ENCODE measurements at regions of chr11 and their contacts with region 1.

Region 1: DNA sequence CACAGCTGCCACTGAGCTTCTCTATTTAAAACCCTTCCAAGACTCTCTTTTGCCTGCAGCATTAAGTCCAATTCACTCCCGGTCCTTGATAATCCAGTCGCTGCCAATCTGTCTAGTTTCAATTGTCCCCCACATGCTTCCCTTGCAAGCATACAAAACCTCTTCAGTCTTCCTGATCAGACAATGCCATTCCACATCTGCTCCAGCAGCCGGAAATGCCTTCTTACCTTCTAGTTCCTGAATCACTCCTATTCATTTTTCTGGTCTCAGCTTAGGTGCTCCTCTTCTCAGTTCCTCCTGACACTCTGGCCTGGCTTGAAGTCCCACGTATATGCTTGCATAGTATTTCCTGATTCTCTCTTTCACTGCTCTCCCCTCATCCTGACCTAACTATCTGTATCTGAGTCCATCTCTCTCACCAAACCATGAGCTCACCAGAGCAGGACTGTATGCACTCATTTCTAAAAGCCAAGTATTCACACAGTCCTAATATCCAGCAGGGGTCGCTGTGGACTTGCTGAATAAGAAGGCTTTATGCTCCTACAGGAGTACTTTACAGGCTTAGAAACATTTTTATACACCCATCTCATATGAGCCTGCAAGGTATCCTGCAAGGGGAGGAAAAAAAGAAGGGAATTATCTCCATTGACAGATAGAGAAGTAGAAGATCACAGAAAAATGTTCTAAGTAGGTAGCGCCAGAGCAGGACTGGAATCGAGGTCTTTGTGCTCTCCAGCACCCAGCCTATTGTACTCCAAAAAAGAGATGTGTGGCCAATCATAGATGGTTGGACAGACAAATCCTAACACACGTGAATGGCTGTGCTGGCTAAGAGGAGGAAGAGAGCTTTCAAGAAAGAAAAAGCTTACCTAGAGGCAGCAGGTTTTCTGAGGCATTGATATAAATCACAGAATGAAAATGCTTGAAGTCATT is 19.2 kb downstream of the XRRA1 start:
- DNase-seq: no peak
- ATAC-seq: peak; percentile 81

Region 2: DNA sequence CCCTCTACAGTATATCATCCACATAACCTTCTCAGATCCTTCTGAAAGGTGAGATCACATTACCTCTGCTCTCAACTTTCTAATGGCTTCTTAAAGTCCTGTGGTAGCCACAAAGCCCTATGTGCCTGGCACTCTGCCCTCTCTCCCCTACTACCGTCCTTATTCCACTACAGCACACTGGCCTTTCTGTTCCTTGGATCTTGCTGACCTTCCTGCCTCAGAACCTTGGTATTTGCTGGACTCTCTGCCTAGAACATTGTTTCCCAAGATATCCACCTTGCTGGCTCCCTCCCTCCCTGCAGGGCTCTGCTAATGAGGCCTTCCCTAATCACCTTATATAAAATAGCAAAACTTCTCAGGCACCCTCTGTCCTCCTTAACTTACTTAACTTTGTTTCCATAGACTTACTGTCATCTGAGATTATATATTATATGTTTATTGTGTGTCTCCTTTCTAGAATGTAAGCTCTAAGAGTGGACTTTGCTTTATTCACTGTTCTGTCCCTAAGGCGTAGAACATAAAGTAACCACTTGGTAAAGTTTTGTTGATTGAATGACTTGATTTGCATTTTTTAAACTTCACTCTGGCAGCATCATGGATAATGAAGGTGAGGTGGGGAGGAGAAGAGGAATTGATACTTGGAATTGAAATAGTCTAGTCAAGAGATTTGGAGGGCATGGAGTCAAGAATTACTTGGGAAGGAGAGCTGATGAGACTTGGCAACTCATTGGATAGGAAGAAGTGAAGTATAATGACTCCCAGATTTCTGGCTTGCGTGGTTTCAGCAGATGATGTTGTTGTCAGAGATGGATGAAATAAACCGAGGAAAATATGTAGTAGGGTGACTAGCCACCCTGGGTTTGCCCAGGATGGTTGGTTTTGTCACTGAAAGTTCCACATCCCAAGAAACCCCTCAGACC is 326.8 kb before region 1 on chr11:
- intact Hi-C with region 1: no loop called
- DNase-seq: no peak
- ATAC-seq: no peak

Region 3: DNA sequence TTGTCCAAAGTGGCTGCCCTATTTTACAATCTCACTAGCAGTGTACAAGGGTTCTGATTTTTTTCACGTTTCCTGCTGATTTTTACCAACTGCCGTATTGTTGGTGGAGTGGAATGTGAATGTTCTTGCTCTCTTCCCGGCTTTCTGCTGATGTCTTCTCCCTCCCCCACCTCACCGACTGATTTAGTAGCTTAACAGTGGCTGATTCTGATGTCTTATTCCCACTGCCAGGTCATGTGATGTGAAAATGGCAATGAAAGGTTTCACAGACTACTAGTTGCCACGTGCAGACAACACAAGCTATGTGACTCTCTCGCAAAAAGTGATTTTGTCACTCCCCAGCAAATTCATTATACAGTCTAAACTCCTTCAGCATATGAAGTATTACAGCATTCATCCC is 41.7 kb after region 1 on chr11:
- intact Hi-C with region 1: no loop called
- DNase-seq: no peak
- ATAC-seq: no peak

Region 4: DNA sequence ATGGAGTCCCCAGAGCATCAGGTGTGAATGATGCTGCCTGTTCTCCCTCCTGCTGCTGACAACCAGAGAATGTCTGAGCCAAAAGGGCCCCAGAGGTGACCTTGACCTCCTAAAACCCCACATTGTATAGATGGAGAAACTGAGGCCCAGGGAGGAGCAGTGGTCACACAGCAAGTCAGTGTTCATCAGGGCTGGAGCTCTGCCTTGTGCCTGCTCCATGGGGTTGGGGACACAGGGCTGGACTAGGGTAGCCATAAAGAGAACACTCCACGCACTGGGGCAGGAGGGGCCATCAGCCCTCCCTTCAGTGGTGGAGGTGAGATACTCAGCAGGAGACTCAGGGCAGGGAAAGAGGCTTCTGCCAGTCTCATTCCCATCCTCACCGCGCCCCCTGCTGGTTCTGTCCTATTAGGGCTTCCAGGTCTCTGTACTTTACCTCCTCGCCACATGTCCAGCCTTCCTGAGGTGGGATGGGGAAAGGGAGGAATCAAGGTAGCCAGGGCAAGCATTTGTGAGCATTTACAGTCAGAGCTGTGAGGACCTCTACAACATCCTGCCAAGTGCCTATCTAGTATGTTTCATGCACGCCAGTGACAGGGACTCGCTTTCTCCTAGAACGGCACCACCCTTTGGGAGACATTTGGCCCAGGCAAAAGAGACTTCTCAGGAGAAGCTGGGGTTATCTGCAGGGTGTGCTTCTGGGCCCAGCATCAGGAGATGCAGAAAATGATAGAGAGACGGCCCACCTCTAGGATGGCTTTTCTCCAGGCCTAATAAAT is 102.3 kb after region 1 on chr11:
- intact Hi-C with region 1: loop called (anchors 1 kb)
- DNase-seq: peak; percentile 82
- ATAC-seq: peak; percentile 51

Region 5: GRCh38 chr11:75248690-75249268 is 319.1 kb after region 1 on chr11:
- intact Hi-C with region 1: loop called (anchors 5 kb)
- DNase-seq: peak; percentile 88
- ATAC-seq: peak; percentile 93